Gastrocnemius medialis (tissue), 4 donors: ENCODE measurements at regions of chr3 and their contacts with region 1.

Region 1: DNA sequence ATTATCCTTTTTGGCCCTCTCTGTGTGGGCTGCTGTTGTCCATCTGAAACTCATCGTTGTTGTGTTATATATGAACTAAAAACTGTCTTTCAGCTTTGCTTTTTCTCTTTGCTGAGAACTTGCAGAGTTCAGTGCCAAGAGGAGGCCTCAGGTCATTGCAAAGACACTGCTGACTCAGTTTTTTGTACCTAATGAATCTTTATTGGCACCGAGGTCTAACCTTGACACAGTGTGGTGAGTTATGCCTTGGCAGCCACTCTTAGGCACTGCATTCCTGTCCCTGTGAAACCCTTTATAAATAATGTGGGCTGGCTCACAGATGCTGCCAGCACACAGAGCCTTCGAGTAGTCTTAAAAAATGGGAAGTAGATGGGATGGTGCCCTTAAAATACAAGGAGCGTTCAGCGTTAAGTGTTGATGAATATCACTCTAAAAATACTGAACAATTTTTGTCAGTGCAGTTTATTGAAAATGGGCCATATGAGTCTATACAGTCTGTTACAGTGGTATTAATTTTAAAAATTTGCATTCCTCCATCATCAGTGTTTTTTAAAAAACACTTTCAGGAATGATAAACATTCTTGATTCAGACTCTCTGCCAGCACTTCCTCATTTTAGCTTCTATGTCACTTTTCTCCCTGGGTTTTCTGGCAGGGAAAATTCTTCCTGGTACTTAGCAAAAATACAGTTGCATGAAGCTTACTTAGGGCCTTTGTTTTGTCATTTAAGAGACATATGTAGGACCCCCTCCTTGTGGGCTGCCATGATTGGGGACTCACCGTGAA is 234.1 kb downstream of the CACNA2D3 start:
- DNase-seq: peak; percentile 8 to 44
- ATAC-seq: peak; percentile 34 to 38
- H3K4me3 ChIP-seq: no peak overlapping the region
- H3K27ac ChIP-seq: peak overlapping the region in 3 of 4 donors; percentile 5 to 48 (median 44)
- H3K4me1 ChIP-seq: peaks cover 56 to 60% of the 10 kb centered on the region in 2 donors
- H3K27me3 ChIP-seq: no peaks in the 10 kb centered on the region
- CTCF ChIP-seq: no peak
- POLR2A ChIP-seq: no peak

Region 2: DNA sequence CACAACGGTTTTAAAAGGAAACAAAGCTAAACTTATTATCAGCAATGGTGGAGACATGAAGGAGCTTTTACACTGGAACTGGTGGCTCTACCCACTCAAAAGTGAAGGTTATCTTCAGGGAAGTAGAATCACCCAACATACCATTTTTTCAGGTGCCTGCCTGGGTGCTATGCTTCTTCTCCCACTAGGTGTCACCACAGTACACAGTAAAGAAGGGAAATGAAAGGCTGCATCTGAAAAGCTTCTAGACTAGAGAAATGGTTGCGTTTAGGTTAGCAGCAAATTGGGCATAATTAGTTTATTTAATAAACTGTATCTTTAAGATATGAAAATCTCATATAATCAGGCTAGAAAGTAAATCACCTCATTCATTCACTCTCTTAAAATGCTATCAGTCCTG is 417.8 kb before region 1 on chr3:
- in situ Hi-C with region 1: loop called in 1 of 4 experiments (anchors 10 kb)
- intact Hi-C with region 1: no loop called
- DNase-seq: peak in 1 of 2 donors; percentile 11
- ATAC-seq: peak in 1 of 2 donors; percentile 73
- H3K4me3 ChIP-seq: no peak overlapping the region
- H3K27ac ChIP-seq: no peak overlapping the region
- H3K4me1 ChIP-seq: no peaks in the 10 kb centered on the region
- H3K27me3 ChIP-seq: no peaks in the 10 kb centered on the region
- CTCF ChIP-seq: peak; percentile 54 to 77 (median 65)
- POLR2A ChIP-seq: no peak

Region 3: GRCh38 chr3:54120657-54121413 is 235.6 kb before region 1 on chr3:
- in situ Hi-C with region 1: no loop called
- intact Hi-C with region 1: loop called (anchors 5 kb)
- DNase-seq: peak in 1 of 2 donors; percentile 36
- ATAC-seq: peak; percentile 28 to 31
- H3K4me3 ChIP-seq: peak overlapping the region; percentile 64 to 79 (median 76)
- H3K27ac ChIP-seq: peak overlapping the region; percentile 83 to 87 (median 86)
- H3K4me1 ChIP-seq: peaks cover 18 to 27% of the 10 kb centered on the region in 2 donors
- H3K27me3 ChIP-seq: no peaks in the 10 kb centered on the region
- CTCF ChIP-seq: no peak
- POLR2A ChIP-seq: no peak

Region 4: DNA sequence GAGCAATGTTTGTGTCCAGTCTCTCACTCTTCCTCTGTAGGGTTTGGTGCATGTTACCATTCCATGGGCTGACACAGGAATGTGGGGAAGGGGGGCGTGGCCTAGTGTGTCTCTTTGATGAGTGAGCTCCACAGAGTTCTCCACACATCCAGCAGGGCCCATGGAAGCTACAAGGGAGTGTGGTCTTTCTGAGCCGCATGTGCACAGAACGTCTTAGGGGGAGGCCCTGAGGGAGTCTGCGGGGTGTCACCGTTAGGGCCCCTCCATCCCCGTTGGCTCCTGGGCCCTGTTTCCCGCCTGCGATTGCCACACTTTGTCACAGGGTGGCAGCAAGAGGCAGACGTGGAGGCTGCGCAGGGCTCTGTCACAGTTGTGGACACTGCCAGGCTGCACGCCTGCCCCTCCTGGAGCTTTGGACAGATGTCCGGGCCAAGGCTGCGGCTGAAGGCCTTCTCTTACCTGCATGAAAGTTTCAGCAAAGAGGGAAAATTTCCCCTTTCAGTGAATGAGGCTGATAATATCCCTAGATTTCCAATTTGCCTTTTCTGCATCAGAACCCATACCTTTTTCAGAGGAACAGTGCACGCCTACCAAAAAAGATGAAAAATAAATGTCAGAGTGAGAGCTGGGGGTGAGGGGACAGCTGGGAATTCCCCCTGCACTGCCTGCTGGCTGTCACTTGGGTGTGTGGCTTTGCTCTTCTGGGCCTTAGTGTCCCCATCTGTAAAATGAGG is 209.8 kb before region 1 on chr3:
- in situ Hi-C with region 1: loop called in 1 of 4 experiments (anchors 10 kb)
- intact Hi-C with region 1: loop called (anchors 1 kb)
- DNase-seq: peak; percentile 48 to 59
- ATAC-seq: peak; percentile 81 to 91
- H3K4me3 ChIP-seq: no peak overlapping the region
- H3K27ac ChIP-seq: no peak overlapping the region
- H3K4me1 ChIP-seq: peaks cover 4 to 11% of the 10 kb centered on the region in 2 donors
- H3K27me3 ChIP-seq: no peaks in the 10 kb centered on the region
- CTCF ChIP-seq: peak; percentile 44 to 73 (median 57)
- POLR2A ChIP-seq: no peak